Activated naive CD4-positive, alpha-beta T cell treated with anti-CD3 and anti-CD28 coated beads for 36 hours (primary cell): ENCODE measurements at regions of chr16 and their contacts with region 1.

Region 1: DNA sequence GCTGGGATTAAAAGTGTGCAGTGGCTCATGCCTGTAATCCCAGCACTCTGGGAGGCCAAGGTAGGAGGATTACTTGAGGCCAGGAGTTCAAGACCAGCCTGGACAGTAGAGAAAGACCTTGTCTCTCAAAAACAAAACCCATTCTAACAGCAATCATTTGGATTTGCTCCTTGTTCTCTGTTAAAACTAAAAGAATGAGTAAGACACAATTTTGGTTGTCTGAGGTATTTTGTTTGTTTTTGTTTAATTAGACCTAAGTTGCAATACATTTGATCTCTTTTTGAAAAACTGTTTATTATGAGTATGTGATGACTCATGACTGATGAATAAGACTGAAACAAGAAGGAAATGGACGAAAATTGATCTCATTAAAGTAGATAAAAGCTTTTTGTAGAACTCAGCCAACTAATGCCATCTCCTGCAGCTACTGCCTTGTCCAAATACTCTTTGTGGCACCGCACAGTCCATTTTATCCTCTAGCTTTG is 29.0 kb downstream of the GLG1 start:
- DNase-seq: no peak
- H3K4me3 Mint-ChIP-seq: no peak overlapping the region
- H3K27ac Mint-ChIP-seq: peak overlapping the region; percentile 10
- H3K4me1 Mint-ChIP-seq: peaks cover 62% of the 10 kb centered on the region
- H3K27me3 Mint-ChIP-seq: no peaks in the 10 kb centered on the region

Region 2: GRCh38 chr16:74601126-74601871 is 23.4 kb after region 1 on chr16:
- CTCF ChIA-PET with region 1: no interaction called
- intact Hi-C with region 1: loop called (anchors 1 kb)
- DNase-seq: peak; percentile 81
- H3K4me3 Mint-ChIP-seq: peak overlapping the region; percentile 38
- H3K27ac Mint-ChIP-seq: peak overlapping the region; percentile 80
- H3K4me1 Mint-ChIP-seq: peaks cover 69% of the 10 kb centered on the region
- H3K27me3 Mint-ChIP-seq: no peaks in the 10 kb centered on the region

Region 3: GRCh38 chr16:74679983-74680382 is 102.1 kb after region 1 on chr16:
- CTCF ChIA-PET with region 1: no interaction called
- intact Hi-C with region 1: no loop called
- DNase-seq: no peak
- H3K4me3 Mint-ChIP-seq: no peak overlapping the region
- H3K27ac Mint-ChIP-seq: no peak overlapping the region
- H3K4me1 Mint-ChIP-seq: no peaks in the 10 kb centered on the region
- H3K27me3 Mint-ChIP-seq: no peaks in the 10 kb centered on the region